Activated B cell treated with CpG ODN at 0.5 μM for 24 hours (primary cell): ENCODE measurements at regions of chr4 and their contacts with region 1.

Region 1: GRCh38 chr4:3041192-3042142 is 32.9 kb downstream of the HTT-AS start:
- DNase-seq: peak; percentile 57
- ATAC-seq: peak; percentile 53
- H3K4me3 Mint-ChIP-seq: peak overlapping the region; percentile 87
- H3K27ac Mint-ChIP-seq: peak overlapping the region; percentile 93
- H3K4me1 Mint-ChIP-seq: peaks cover 79% of the 10 kb centered on the region
- H3K27me3 Mint-ChIP-seq: no peaks in the 10 kb centered on the region
- CTCF ChIP-seq: no peak

Region 2: DNA sequence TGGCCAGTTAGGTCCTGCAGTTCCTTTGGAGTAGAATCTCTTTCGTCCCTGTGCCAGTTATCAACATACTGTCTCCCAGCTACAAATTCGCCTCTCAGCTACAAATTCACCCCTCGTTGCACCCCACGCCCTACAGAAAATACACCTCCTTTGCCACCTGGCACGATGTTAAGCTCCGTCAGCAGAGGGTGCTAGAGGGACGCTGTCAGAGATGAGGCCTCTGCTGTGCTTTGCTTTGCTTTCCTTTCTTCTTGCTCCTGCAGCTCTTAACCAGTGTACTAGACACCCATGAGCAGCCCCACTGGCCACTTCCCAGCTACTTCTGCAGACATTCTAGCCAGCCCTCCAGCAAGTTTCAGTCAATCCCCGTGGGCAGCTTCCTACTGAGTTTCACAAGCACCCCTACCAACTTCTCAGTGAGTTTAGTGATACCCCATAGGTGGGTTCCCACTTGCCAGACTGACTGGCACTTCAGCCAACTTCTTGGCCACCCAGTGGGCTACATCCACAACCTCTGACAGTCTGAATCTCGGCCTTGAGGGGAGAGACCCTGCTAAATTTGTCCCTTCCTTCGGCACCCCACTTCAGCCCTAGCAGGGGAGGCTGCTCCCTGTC is 821.3 kb before region 1 on chr4:
- CTCF ChIA-PET with region 1: no interaction called
- POLR2A ChIA-PET with region 1: no interaction called
- intact Hi-C with region 1: loop called (anchors 5 kb)
- DNase-seq: peak; percentile 62
- ATAC-seq: peak; percentile 97
- H3K4me3 Mint-ChIP-seq: no peak overlapping the region
- H3K27ac Mint-ChIP-seq: no peak overlapping the region
- H3K4me1 Mint-ChIP-seq: peaks cover 4% of the 10 kb centered on the region
- H3K27me3 Mint-ChIP-seq: no peaks in the 10 kb centered on the region
- CTCF ChIP-seq: peak; percentile 94

Region 3: DNA sequence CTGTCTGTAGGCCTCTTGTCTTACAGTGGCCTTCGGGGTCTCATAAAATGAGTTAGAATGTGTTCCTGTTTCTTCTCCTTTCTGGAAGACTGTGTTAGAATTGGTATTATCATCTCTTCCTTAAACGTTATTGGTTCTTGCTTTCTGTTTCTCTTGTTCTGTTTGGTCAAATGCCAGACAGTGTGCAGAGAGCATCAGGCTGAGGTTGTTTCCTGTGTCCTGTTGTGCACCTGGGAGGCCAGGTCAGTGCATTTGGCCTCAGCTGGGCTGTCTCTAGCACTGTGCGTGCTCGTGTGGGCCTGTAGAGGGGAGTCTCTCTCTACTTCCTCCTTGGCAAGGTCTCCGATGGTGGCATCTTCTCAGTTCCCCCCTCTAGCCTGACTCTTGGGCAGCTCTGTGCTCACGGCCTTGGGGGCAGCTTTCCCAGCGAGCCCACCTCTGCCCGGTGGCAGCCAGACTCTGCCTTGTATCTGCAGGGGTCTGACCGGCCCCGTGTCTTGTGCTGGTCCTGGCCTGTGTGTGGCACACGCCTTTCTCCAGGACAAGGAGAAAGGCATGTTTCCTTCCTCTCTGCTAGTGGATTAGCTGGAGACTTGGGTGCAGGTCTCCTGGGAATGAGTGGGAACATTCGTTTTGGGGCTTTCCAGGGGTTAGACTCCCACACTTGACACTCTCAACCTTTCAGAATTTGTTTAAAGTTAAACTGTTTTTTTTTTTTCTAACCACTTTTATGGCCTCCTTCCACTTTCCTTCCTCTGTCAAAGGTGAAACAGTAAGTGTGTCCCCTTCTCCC is 442.8 kb before region 1 on chr4:
- CTCF ChIA-PET with region 1: interaction called, 4 read pairs
- POLR2A ChIA-PET with region 1: interaction called, 3 read pairs
- intact Hi-C with region 1: loop called (anchors 1 kb)
- DNase-seq: peak; percentile 41
- ATAC-seq: peak; percentile 98
- H3K4me3 Mint-ChIP-seq: peak overlapping the region; percentile 67
- H3K27ac Mint-ChIP-seq: peak overlapping the region; percentile 85
- H3K4me1 Mint-ChIP-seq: peaks cover 68% of the 10 kb centered on the region
- H3K27me3 Mint-ChIP-seq: no peaks in the 10 kb centered on the region
- CTCF ChIP-seq: no peak

Region 4: DNA sequence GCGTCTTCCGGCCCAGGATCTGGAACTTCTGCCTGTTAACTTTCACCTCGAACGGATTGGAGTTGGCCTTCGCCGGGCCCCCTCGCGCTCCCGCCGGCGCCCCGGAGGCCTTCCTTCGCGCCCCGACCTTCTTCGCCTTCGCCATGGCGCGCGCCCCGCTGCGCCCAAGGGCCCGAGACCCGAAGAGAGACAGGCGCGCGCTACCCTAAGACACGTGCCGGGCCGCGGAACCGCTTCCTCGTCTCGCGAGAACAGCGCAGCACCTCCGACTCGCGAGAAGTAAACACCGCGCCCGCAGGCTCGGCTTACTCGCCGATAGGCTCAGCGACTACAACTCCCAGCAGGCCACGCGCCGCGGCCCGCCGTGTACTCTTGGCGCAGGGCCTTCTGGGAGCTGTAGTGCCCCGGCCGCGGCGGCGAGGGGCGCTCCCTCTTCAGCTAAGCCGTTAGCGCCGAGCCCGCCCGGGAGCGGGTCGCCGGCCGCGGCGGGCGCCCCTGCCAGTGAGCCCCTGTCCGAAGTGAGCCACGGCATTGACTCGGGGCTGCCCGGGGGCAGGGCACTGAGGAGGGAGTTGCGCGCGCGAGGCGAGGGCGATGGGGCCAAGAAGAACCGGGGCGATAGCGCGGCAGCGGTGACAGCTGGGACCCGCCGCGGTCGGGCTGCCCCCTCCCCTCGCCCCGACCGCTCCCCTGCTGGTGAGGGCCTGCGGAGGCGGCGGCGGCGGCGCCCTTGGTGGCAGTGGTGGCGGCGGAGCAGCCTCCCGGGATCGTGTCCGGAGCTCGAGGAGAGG is 78.1 kb before region 1 on chr4 and contains the starts of genes GRK4 and NOP14:
- CTCF ChIA-PET with region 1: no interaction called
- POLR2A ChIA-PET with region 1: interaction called, 11 read pairs
- intact Hi-C with region 1: loop called (anchors 1 kb)
- DNase-seq: peak; percentile 89
- ATAC-seq: peak; percentile 91
- H3K4me3 Mint-ChIP-seq: peak within 1 kb of the TSS; percentile 91
- H3K27ac Mint-ChIP-seq: peak within 1 kb of the TSS; percentile 92
- H3K4me1 Mint-ChIP-seq: peaks cover 29% of the 10 kb centered on the region
- H3K27me3 Mint-ChIP-seq: no peaks in the 10 kb centered on the region
- CTCF ChIP-seq: no peak
- total RNA-seq, gene GRK4: 1.4 and 2.1 TPM in 2 replicates
- total RNA-seq, gene NOP14: 56.3 and 57.3 TPM in 2 replicates

Region 5: DNA sequence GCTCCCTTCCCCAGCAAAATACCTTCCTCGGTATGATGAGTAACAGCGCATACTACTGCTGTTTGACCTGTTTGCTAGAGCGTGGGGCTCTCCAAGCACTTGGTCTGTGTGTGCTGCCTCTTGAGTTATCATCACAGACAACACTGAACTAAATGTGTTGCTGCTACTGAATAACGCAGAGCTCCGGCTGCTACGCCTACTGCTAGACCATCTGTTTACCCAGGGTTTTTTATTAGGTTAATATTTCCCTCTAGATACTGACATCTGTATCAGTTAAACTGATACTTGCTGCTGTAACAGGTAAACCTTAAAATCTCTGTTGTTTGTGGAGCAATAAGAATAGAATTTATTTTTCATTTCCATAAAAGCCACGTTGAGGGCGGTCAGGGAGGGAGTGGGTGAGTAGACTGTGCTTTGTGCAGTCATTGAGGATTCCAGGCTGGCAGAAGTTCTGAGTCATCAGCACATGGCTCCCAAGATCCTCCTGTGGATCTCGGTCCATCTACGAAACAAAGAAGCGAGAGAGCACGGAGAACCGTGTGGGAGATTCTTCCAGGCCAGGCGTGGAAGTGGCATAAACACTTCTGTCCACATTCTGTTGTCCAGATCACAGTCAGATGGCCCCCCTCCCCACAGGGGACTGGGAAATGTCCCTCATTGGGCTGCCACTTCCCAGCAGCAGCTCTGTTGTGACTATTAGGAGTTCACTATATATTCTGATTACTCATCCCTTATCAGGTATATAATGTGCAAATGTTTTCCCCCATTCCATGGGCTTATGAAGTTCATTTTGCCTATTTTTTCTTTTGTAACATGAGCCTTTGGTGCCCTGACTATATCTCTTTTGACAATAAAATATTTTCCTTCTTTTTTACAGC is 64.0 kb before region 1 on chr4:
- CTCF ChIA-PET with region 1: interaction called, 10 read pairs
- POLR2A ChIA-PET with region 1: no interaction called
- intact Hi-C with region 1: loop called (anchors 1 kb)
- DNase-seq: no peak
- ATAC-seq: no peak
- H3K4me3 Mint-ChIP-seq: no peak overlapping the region
- H3K27ac Mint-ChIP-seq: no peak overlapping the region
- H3K4me1 Mint-ChIP-seq: peaks cover 4% of the 10 kb centered on the region
- H3K27me3 Mint-ChIP-seq: no peaks in the 10 kb centered on the region
- CTCF ChIP-seq: no peak

Region 6: GRCh38 chr4:2991243-2991642 is 50.2 kb before region 1 on chr4:
- CTCF ChIA-PET with region 1: no interaction called
- POLR2A ChIA-PET with region 1: no interaction called
- intact Hi-C with region 1: no loop called
- DNase-seq: no peak
- ATAC-seq: no peak
- H3K4me3 Mint-ChIP-seq: no peak overlapping the region
- H3K27ac Mint-ChIP-seq: no peak overlapping the region
- H3K4me1 Mint-ChIP-seq: no peaks in the 10 kb centered on the region
- H3K27me3 Mint-ChIP-seq: peaks cover 4% of the 10 kb centered on the region
- CTCF ChIP-seq: no peak

Region 7: DNA sequence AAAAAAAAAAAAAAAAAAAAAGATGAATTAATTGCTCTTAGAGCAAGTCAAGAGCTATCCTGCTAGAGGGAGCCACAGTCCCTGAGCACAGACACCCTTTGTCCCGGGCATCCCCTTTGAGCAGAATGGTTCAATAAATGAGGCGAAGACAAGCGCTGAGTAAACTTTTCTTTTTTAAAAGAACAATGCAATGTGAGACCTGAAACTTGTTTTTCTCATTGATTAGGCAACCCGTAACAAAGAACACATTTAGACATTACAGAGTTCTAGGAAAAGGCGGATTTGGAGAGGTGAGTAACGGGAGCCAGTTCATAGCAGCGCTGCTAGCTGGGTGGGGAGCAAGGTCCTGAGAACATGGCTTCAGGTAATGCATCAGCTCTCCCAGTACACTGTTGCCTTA is 32.0 kb before region 1 on chr4:
- CTCF ChIA-PET with region 1: interaction called, 12 read pairs
- POLR2A ChIA-PET with region 1: no interaction called
- intact Hi-C with region 1: no loop called
- DNase-seq: no peak
- ATAC-seq: peak; percentile 49
- H3K4me3 Mint-ChIP-seq: no peak overlapping the region
- H3K27ac Mint-ChIP-seq: no peak overlapping the region
- H3K4me1 Mint-ChIP-seq: no peaks in the 10 kb centered on the region
- H3K27me3 Mint-ChIP-seq: no peaks in the 10 kb centered on the region
- CTCF ChIP-seq: no peak

Region 8: GRCh38 chr4:3030546-3031356 is 10.7 kb before region 1 on chr4:
- CTCF ChIA-PET with region 1: no interaction called
- POLR2A ChIA-PET with region 1: no interaction called
- intact Hi-C with region 1: no loop called
- DNase-seq: no peak
- ATAC-seq: no peak
- H3K4me3 Mint-ChIP-seq: no peak overlapping the region
- H3K27ac Mint-ChIP-seq: no peak overlapping the region
- H3K4me1 Mint-ChIP-seq: no peaks in the 10 kb centered on the region
- H3K27me3 Mint-ChIP-seq: peaks cover 3% of the 10 kb centered on the region
- CTCF ChIP-seq: no peak

Region 9: GRCh38 chr4:4225915-4226605 is 1184.6 kb after region 1 on chr4:
- CTCF ChIA-PET with region 1: no interaction called
- POLR2A ChIA-PET with region 1: no interaction called
- intact Hi-C with region 1: no loop called
- DNase-seq: no peak
- ATAC-seq: no peak
- H3K4me3 Mint-ChIP-seq: no peak overlapping the region
- H3K27ac Mint-ChIP-seq: no peak overlapping the region
- H3K4me1 Mint-ChIP-seq: peaks cover 9% of the 10 kb centered on the region
- H3K27me3 Mint-ChIP-seq: peaks cover 50% of the 10 kb centered on the region
- CTCF ChIP-seq: no peak